Activated naive CD4-positive, alpha-beta T cell treated with anti-CD3 and anti-CD28 coated beads for 36 hours (primary cell): ENCODE measurements at regions of chr19 and their contacts with region 1.

Region 1: GRCh38 chr19:18281082-18282020 is at the start of gene JUND:
- DNase-seq: peak; percentile 96
- H3K4me3 Mint-ChIP-seq: peak within 1 kb of the TSS; percentile 95
- H3K27ac Mint-ChIP-seq: peak within 1 kb of the TSS; percentile 99
- H3K4me1 Mint-ChIP-seq: peaks cover 45% of the 10 kb centered on the region
- H3K27me3 Mint-ChIP-seq: no peaks in the 10 kb centered on the region
- total RNA-seq, gene JUND: 87.9 to 105 TPM

Region 2: DNA sequence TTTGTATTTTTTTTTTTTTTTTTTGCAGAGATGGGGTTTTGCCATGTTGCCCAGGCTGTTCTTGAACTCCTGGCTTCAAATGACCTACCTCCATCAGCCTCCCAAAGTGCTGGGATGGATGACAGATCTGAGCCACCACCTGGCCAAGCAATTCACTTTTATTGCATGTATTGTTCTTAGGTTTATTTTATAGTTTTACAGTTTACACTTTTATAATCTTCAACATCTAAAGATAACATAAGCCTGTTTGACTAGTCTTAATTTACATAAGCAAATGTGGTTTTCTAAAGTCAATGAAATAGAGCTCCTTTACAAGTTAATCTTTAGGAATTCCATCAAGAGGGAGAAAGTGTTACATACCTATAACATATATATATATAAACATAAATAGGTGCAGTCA is 97.8 kb before region 1 on chr19:
- CTCF ChIA-PET with region 1: no interaction called
- intact Hi-C with region 1: no loop called
- DNase-seq: no peak
- H3K4me3 Mint-ChIP-seq: no peak overlapping the region
- H3K27ac Mint-ChIP-seq: no peak overlapping the region
- H3K4me1 Mint-ChIP-seq: no peaks in the 10 kb centered on the region
- H3K27me3 Mint-ChIP-seq: no peaks in the 10 kb centered on the region

Region 3: GRCh38 chr19:18203863-18204393 is 77.4 kb before region 1 on chr19 and contains the start of gene RAB3A:
- CTCF ChIA-PET with region 1: interaction called, 9 read pairs
- intact Hi-C with region 1: loop called (anchors 1 kb)
- DNase-seq: peak; percentile 100
- H3K4me3 Mint-ChIP-seq: peak within 1 kb of the TSS; percentile 94
- H3K27ac Mint-ChIP-seq: peak within 1 kb of the TSS; percentile 68
- H3K4me1 Mint-ChIP-seq: peaks cover 22% of the 10 kb centered on the region
- H3K27me3 Mint-ChIP-seq: peaks cover 5% of the 10 kb centered on the region
- total RNA-seq, gene RAB3A: 3.8 to 6.0 TPM

Region 4: GRCh38 chr19:18312092-18312534 is 30.8 kb after region 1 on chr19:
- CTCF ChIA-PET with region 1: interaction called, 60 read pairs
- intact Hi-C with region 1: no loop called
- DNase-seq: no peak
- H3K4me3 Mint-ChIP-seq: no peak overlapping the region
- H3K27ac Mint-ChIP-seq: no peak overlapping the region
- H3K4me1 Mint-ChIP-seq: peaks cover 21% of the 10 kb centered on the region
- H3K27me3 Mint-ChIP-seq: no peaks in the 10 kb centered on the region

Region 5: DNA sequence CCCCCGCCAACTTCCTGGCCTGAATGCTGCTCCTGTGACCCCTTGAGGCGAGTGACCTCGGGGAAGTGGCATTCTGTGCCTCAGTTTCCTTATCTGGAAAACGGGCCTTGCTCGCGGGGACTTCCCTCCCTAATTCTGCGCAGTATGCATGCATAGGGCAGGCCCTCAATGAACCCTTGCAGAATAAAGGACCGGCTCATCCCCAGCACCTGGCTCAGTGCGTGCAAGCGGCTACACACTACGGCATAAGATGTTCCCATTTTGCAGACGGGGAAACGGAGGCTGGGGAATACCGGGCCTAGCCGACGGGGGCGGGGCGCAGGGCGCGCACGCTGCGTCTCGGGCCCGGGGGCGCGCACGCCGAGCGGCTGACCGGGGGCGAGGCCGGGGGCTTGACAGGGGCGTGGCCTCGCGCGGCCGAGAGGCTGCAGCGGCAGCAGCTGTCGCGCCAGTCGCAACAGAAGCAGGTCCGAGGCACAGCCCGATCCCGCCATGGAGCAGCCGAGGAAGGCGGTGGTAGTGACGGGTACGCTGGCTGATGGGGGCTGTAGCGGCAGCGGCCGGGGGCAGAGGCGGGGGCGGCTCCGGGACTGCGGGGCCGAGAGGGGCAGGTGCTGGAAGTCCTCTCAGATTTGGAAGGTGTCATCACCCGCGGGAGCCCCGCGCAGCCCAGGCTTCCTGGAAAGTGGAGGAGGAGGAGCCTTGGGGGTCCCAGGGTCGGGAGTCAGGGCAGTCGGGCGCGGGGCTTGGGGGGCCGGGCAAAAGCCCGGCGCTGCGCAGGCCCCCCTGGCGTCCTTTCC is 59.0 kb after region 1 on chr19 and contains the start of gene PGPEP1:
- CTCF ChIA-PET with region 1: interaction called, 16 read pairs
- intact Hi-C with region 1: loop called (anchors 1 kb)
- DNase-seq: peak; percentile 54
- H3K4me3 Mint-ChIP-seq: peak within 1 kb of the TSS; percentile 77
- H3K27ac Mint-ChIP-seq: peak within 1 kb of the TSS; percentile 73
- H3K4me1 Mint-ChIP-seq: peaks cover 15% of the 10 kb centered on the region
- H3K27me3 Mint-ChIP-seq: no peaks in the 10 kb centered on the region
- total RNA-seq, gene PGPEP1: 14.4 to 15.6 TPM

Region 6: GRCh38 chr19:18419195-18419698 is 137.9 kb after region 1 on chr19 and contains the start of gene SSBP4:
- CTCF ChIA-PET with region 1: interaction called, 10 read pairs
- intact Hi-C with region 1: loop called (anchors 2 kb)
- DNase-seq: peak; percentile 64
- H3K4me3 Mint-ChIP-seq: peak within 1 kb of the TSS; percentile 82
- H3K27ac Mint-ChIP-seq: peak within 1 kb of the TSS; percentile 56
- H3K4me1 Mint-ChIP-seq: peaks cover 73% of the 10 kb centered on the region
- H3K27me3 Mint-ChIP-seq: peaks cover 32% of the 10 kb centered on the region
- total RNA-seq, gene SSBP4: 62.6 to 71.4 TPM

Region 7: GRCh38 chr19:18831524-18832305 is 550.4 kb after region 1 on chr19 and contains the start of gene UPF1:
- CTCF ChIA-PET with region 1: no interaction called
- intact Hi-C with region 1: loop called (anchors 10 kb)
- DNase-seq: peak; percentile 96
- H3K4me3 Mint-ChIP-seq: peak within 1 kb of the TSS; percentile 97
- H3K27ac Mint-ChIP-seq: peak within 1 kb of the TSS; percentile 86
- H3K4me1 Mint-ChIP-seq: peaks cover 34% of the 10 kb centered on the region
- H3K27me3 Mint-ChIP-seq: no peaks in the 10 kb centered on the region
- total RNA-seq, gene UPF1: 95.0 to 105 TPM